ENCODE measurements at regions of chr7 and their contacts with region 1.

Region 1: DNA sequence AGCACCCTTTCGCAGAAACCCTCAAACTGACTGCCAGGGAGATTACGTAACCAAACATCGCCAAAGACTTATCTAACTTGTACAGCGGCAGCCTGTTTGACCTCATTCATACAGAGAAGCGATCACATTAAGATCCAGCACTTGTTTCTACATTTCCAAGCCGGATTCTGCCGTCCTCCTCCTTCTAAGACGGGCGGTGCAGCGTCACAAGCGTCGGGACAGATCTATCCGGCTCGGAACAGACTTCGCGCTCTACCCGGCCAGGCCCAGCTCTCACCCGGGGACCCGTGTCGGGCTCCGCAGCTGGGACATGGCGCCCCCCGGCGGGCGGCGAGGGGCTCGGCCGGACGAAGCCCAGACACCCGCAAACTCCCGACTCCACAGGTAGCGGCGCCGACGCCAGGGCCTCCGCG is 373 bp downstream of the H2AZ2 start:
- DNase-seq: peak; percentile 88
- ATAC-seq: peak; percentile 69
- H3K4me3 Mint-ChIP-seq: peak overlapping the region; percentile 92
- H3K27ac Mint-ChIP-seq: peak overlapping the region; percentile 100
- H3K4me1 Mint-ChIP-seq: peaks cover 36% of the 10 kb centered on the region
- H3K27me3 Mint-ChIP-seq: no peaks in the 10 kb centered on the region
- CTCF ChIP-seq: peak; percentile 85

Region 2: GRCh38 chr7:44921607-44922359 is 74.3 kb after region 1 on chr7:
- CTCF ChIA-PET with region 1: interaction called, 199 read pairs
- POLR2A ChIA-PET with region 1: interaction called, 25 read pairs
- intact Hi-C with region 1: no loop called
- DNase-seq: peak; percentile 99
- ATAC-seq: peak; percentile 99
- H3K4me3 Mint-ChIP-seq: no peak overlapping the region
- H3K27ac Mint-ChIP-seq: peak overlapping the region; percentile 63
- H3K4me1 Mint-ChIP-seq: peaks cover 16% of the 10 kb centered on the region
- H3K27me3 Mint-ChIP-seq: peaks cover under 1% of the 10 kb centered on the region
- CTCF ChIP-seq: peak; percentile 88